H1 (cell line): ENCODE measurements at regions of chr13 and their contacts with region 1.

Region 1: GRCh38 chr13:19818210-19818842 is 35.6 kb upstream of the PSPC1 start:
- DNase-seq: peak; percentile 77 to 97
- H3K4me3 ChIP-seq: no peak overlapping the region
- H3K27ac ChIP-seq: no peak overlapping the region
- H3K4me1 ChIP-seq: peaks cover 0 to 3% (median under 1%) of the 10 kb centered on the region in 4 experiments; a peak in 1 of 7 replicates
- H3K27me3 ChIP-seq: no peaks in the 10 kb centered on the region
- CTCF ChIP-seq: peak; percentile 89 to 100 (median 99)
- EP300 ChIP-seq: no peak
- POLR2A ChIP-seq: no peak
- RAD21 ChIP-seq: peak; percentile 92

Region 2: GRCh38 chr13:19567820-19568534 is 250.3 kb before region 1 on chr13:
- CTCF ChIA-PET with region 1: no interaction called
- POLR2A ChIA-PET with region 1: no interaction called
- DNase-seq: no peak
- H3K4me3 ChIP-seq: no peak overlapping the region
- H3K27ac ChIP-seq: no peak overlapping the region
- H3K4me1 ChIP-seq: no peaks in the 10 kb centered on the region
- H3K27me3 ChIP-seq: no peaks in the 10 kb centered on the region
- CTCF ChIP-seq: no peak
- EP300 ChIP-seq: no peak
- POLR2A ChIP-seq: no peak
- RAD21 ChIP-seq: no peak

Region 3: GRCh38 chr13:19791953-19792537 is 26.3 kb before region 1 on chr13:
- CTCF ChIA-PET with region 1: interaction called, 11 read pairs
- POLR2A ChIA-PET with region 1: interaction called, 4 read pairs
- DNase-seq: no peak
- H3K4me3 ChIP-seq: no peak overlapping the region
- H3K27ac ChIP-seq: no peak overlapping the region
- H3K4me1 ChIP-seq: peaks cover 0 to 5% (median 1%) of the 10 kb centered on the region in 4 experiments; a peak in 3 of 7 replicates
- H3K27me3 ChIP-seq: no peaks in the 10 kb centered on the region
- CTCF ChIP-seq: no peak
- EP300 ChIP-seq: no peak
- POLR2A ChIP-seq: no peak
- RAD21 ChIP-seq: no peak

Region 4: GRCh38 chr13:19836472-19836871 is 18.1 kb after region 1 on chr13:
- CTCF ChIA-PET with region 1: interaction called, 17 read pairs
- POLR2A ChIA-PET with region 1: no interaction called
- DNase-seq: no peak
- H3K4me3 ChIP-seq: no peak overlapping the region
- H3K27ac ChIP-seq: no peak overlapping the region
- H3K4me1 ChIP-seq: no peaks in the 10 kb centered on the region
- H3K27me3 ChIP-seq: no peaks in the 10 kb centered on the region
- CTCF ChIP-seq: no peak
- EP300 ChIP-seq: no peak
- POLR2A ChIP-seq: no peak
- RAD21 ChIP-seq: no peak